SK-N-SH (cell line): ENCODE measurements at regions of chr1 and their contacts with region 1.

Region 1: DNA sequence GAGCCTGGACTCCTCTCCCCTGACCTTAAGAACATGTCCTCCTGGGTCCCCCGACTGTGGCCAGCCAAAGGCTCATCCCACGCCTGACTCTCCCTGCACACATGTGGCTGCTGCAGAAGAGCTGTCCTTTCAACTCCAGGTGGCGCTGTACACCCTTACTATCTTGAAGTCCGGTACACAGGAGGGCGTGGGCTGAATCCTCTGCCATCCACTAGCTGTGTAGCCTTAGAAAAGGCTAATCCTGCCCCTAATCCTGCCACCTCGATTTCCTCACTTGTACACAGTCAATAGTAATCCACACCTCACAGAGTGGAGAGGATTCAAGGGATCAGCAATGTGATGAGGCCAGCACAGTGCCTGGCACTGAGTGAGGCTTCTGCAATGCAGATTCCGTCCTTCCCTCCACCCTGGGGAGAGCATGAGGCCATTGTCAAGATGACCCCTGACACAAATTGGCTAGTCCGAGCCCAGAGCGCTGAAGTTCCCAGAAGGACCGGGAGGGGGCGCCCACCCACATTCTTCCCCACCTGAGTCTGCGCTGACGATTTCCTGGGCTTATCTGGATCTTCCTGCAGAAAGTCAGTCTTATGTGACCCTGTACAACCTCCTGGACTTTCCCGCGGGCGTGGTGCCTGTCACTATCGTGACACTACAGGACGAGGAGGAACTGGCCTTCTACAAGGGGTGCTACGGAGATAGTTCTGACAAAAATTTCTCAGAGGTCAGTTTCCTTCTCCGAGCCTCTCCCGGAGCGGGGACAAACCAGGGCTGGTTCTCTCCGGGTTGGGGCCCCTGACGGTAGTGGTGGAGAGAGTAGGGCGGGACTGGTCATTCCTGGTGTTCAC is 47.1 kb upstream of the DMBX1 start:
- DNase-seq: peak; percentile 81
- H3K4me3 ChIP-seq: peak overlapping the region; percentile 49 to 55
- H3K27ac ChIP-seq: 0 out of 4 replicates have a peak overlapping the region, but pooled peaks of 1 of the 2 experiments have one; percentile 53
- H3K4me1 ChIP-seq: peaks cover 0 to 6% of the 10 kb centered on the region in 2 experiments; a peak in 1 of 4 replicates
- H3K27me3 ChIP-seq: peaks cover 4% of the 10 kb centered on the region; the same call in 1 of the 2 replicates
- CTCF ChIP-seq: peak; percentile 91
- EP300 ChIP-seq: no peak
- RAD21 ChIP-seq: peak; percentile 58

Region 2: GRCh38 chr1:46456411-46456963 is 13.9 kb after region 1 on chr1:
- CTCF ChIA-PET with region 1: interaction called, 99 read pairs
- POLR2A ChIA-PET with region 1: no interaction called
- DNase-seq: no peak
- H3K4me3 ChIP-seq: no peak overlapping the region
- H3K27ac ChIP-seq: no peak overlapping the region
- H3K4me1 ChIP-seq: no peaks in the 10 kb centered on the region; a peak in 1 of 4 replicates
- H3K27me3 ChIP-seq: no peaks in the 10 kb centered on the region
- CTCF ChIP-seq: no peak
- EP300 ChIP-seq: no peak
- RAD21 ChIP-seq: no peak

Region 3: GRCh38 chr1:46489638-46490405 is 47.3 kb after region 1 on chr1 and contains the start of gene DMBX1:
- CTCF ChIA-PET with region 1: interaction called, 28 read pairs
- POLR2A ChIA-PET with region 1: no interaction called
- DNase-seq: peak; percentile 86
- H3K4me3 ChIP-seq: peak within 1 kb of the TSS; percentile 31 to 47; a peak in 3 of 4 replicates
- H3K27ac ChIP-seq: no peak within 1 kb of the TSS
- H3K4me1 ChIP-seq: peaks cover 0 to 5% of the 10 kb centered on the region in 2 experiments; a peak in 1 of 4 replicates
- H3K27me3 ChIP-seq: peaks cover 59% of the 10 kb centered on the region
- CTCF ChIP-seq: no peak
- EP300 ChIP-seq: no peak
- RAD21 ChIP-seq: no peak
- polyA plus RNA-seq, gene DMBX1: not detected in 2 replicates

Region 4: GRCh38 chr1:46517010-46517600 is 74.6 kb after region 1 on chr1:
- CTCF ChIA-PET with region 1: interaction called, 23 read pairs
- POLR2A ChIA-PET with region 1: no interaction called
- DNase-seq: no peak
- H3K4me3 ChIP-seq: no peak overlapping the region
- H3K27ac ChIP-seq: no peak overlapping the region
- H3K4me1 ChIP-seq: peaks cover 12 to 29% of the 10 kb centered on the region in 2 experiments; a peak in 3 of 4 replicates
- H3K27me3 ChIP-seq: no peaks in the 10 kb centered on the region
- CTCF ChIP-seq: no peak
- EP300 ChIP-seq: no peak
- RAD21 ChIP-seq: no peak

Region 5: GRCh38 chr1:46547481-46548383 is 105.2 kb after region 1 on chr1:
- CTCF ChIA-PET with region 1: interaction called, 496 read pairs
- POLR2A ChIA-PET with region 1: no interaction called
- DNase-seq: peak; percentile 64
- H3K4me3 ChIP-seq: no peak overlapping the region
- H3K27ac ChIP-seq: no peak overlapping the region
- H3K4me1 ChIP-seq: peaks cover 0 to 9% of the 10 kb centered on the region in 2 experiments; a peak in 1 of 4 replicates
- H3K27me3 ChIP-seq: peaks cover 18% of the 10 kb centered on the region; the same call in 1 of the 2 replicates
- CTCF ChIP-seq: peak; percentile 70
- EP300 ChIP-seq: no peak
- RAD21 ChIP-seq: peak; percentile 61

Region 6: GRCh38 chr1:46686255-46686654 is 243.7 kb after region 1 on chr1:
- CTCF ChIA-PET with region 1: no interaction called
- POLR2A ChIA-PET with region 1: no interaction called
- DNase-seq: no peak
- H3K4me3 ChIP-seq: no peak overlapping the region
- H3K27ac ChIP-seq: no peak overlapping the region
- H3K4me1 ChIP-seq: peaks cover 2 to 33% of the 10 kb centered on the region in 2 experiments
- H3K27me3 ChIP-seq: no peaks in the 10 kb centered on the region
- CTCF ChIP-seq: no peak
- EP300 ChIP-seq: no peak
- RAD21 ChIP-seq: no peak

Region 7: GRCh38 chr1:46772571-46772970 is 330.0 kb after region 1 on chr1:
- CTCF ChIA-PET with region 1: no interaction called
- POLR2A ChIA-PET with region 1: no interaction called
- DNase-seq: no peak
- H3K4me3 ChIP-seq: no peak overlapping the region
- H3K27ac ChIP-seq: no peak overlapping the region
- H3K4me1 ChIP-seq: no peaks in the 10 kb centered on the region
- H3K27me3 ChIP-seq: no peaks in the 10 kb centered on the region
- CTCF ChIP-seq: no peak
- EP300 ChIP-seq: no peak
- RAD21 ChIP-seq: no peak